ENCODE measurements at regions of chr3 and their contacts with region 1.

Region 1: DNA sequence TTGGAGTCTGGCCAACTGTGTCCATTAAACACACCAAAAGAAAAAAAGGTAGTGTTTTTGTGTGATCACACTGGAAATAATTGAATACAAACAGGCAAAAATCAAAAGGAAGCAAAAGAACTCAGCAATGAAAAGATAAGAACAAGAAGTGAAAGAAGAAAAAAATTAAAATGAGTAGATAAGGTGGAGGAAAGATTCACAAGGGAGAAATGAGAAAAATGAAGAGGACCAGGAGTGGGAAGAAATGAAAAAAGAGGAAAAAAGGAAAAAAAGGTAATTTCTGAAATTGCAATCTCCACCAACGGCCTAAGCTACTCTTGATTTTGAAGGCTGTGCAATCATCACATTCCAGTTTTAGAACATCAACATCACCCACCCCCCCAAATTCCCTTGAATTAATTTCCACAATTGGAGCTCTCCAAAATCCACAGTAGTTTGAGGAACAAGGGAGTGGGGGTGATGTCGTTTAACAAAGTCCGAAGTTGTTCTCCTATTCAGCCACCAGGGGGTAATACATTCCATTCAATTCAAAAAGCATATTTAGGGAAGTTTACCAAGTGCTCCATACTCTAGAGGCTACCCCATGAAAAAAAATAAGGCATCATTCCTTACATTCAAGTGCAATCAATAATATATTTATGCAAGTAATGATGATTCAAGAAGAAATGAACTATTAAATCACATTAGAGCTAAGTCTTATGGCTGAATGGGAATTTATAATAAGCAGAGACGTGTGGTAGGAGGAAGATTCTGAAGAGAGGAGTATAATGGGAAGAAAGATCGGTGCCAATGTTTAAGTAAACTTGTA is 37.4 kb downstream of the ZNF860 start:
- DNase-seq: no peak
- H3K4me3 ChIP-seq: no peak overlapping the region
- CTCF ChIP-seq: peak; percentile 48

Region 2: DNA sequence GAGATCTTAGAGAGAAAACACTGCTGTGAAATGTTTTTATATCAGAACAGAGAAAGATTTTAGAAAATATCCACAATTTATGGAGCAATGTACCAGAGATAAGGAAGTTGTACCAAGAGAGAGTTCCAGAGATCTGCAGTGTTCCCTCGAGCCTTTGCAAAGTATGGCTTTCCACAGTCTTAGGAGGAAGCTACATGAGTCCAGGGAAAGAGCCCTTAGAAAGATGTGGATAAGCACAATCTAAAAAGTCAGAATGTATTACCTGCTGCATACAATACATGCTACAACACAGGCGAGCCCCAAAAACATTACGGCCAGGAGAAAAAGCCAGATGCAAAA is 18.9 kb after region 1 on chr3:
- CTCF ChIA-PET with region 1: interaction called, 19 read pairs
- POLR2A ChIA-PET with region 1: no interaction called
- DNase-seq: no peak
- H3K4me3 ChIP-seq: no peak overlapping the region
- CTCF ChIP-seq: no peak

Region 3: GRCh38 chr3:32165442-32165841 is 146.5 kb after region 1 on chr3:
- CTCF ChIA-PET with region 1: no interaction called
- POLR2A ChIA-PET with region 1: no interaction called
- DNase-seq: no peak
- H3K4me3 ChIP-seq: no peak overlapping the region
- CTCF ChIP-seq: no peak